ENCODE measurements at regions of chr4 and their contacts with region 1.

Region 1: GRCh38 chr4:154551872-154552686 is 1.9 kb upstream of the PLRG1 start:
- DNase-seq: peak; percentile 40
- CTCF ChIP-seq: peak; percentile 76

Region 2: DNA sequence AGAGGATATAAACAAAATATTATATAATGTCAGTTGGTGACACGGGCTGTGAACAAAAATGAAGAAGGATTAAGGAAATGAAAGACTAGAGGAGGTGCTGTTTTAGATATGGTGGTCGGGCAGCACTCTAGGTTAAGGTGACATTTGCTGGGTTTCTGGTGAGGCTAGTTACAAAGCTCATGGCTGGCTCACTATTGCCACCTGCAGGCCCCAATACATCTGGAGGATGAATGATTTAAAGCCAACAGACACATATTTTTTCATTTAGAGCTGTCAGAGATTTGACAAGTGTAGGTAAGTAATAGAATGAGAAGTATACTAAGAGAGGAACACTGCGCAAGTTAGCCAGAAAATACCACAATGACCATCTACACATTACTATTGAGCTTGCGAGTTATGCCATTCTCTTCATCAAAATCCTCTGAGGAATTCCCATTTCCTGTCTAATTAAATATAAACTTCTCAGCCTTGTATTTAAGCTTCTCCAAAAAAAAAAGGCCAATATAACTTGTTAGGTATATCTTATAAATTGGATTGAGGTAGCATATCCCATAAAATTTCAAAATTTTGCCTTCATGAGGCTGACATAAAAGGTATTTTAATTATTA is 66.7 kb after region 1 on chr4:
- in situ Hi-C with region 1: loop called (anchors 10 kb)
- DNase-seq: peak; percentile 52
- CTCF ChIP-seq: peak; percentile 72

Region 3: DNA sequence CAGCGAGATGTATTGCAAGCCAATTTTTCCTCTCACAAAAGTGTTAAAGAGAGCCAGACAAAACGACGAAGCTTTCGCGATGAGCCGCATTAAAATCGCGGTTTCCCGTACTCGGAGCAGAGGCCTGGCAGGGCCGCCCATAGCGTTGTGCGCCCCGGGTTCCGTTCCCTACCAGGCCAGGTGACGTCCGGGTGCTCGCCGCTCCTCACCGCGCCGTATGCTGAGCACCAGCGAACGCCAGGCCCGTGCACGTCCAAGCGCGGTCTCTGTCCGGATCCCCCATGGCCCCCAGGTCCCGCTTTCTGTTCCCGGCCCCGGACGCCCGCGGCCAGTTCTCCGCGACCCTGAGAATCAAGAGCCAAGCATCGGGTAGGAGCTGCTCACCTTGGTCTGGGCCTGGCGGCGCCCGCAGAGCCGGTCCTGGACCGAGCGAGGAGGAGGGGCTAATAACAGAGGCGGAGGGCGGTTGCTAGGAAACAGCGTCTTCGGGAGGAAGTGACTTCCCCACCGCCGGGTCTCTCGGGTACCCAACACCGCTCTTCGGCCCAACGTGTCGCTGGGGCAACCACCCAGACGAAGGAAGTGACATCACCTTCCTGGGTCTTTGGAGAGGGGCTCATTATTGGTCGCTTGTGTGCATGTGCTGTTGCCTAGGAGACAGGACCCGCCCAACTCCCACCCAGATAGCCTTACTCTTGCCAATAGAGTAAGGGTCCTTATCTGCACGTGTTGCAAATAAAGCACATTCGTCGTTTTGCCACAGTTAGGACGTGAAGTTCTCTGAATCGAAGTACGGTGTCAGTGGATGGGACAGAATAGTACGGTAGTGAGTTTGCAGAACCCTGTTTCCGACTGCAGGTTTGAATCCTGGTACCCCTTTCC is 824.5 kb after region 1 on chr4 and contains the start of gene MAP9:
- in situ Hi-C with region 1: loop called (anchors 10 kb)
- DNase-seq: peak; percentile 92
- CTCF ChIP-seq: no peak

Region 4: GRCh38 chr4:155478336-155478825 is 926.3 kb after region 1 on chr4:
- in situ Hi-C with region 1: no loop called
- DNase-seq: no peak
- CTCF ChIP-seq: no peak